OCI-LY7 (cell line): ENCODE measurements at regions of chr5 and their contacts with region 1.

Region 1: DNA sequence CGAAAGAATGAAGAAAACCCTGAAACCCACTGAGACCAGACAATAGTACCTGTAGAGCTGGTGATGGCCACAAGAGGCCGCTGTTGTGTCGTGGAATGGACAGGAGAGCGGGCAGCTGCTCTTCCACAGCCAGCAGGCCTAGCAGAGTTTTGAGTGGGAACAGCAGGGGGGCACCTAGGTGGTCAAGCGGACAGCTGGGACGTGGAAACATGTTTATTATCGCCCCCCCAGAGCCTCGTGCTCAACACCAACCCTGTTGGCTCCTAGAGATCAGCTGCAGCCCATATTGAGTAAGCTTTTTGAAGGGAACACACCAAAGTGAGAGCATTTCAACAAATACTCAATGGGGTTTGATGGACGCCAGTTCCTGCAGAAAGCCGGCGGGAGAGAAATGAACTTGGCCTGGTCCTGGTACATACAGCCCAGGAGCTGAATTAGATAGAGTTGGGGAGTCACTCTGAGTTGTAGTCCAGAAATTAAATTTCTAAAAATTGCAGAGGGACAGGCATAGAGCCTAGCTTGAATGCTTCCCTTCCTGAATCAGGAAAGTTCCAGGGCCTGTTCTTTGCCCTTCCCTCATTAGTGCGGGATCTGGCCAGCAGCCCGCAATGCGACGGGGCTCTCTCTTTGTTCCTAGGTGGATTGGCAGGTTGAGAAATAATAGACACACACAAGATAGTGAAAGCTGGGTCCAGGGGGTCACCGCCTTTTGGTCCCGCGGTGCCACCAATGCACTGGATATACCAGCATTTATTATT is 33.8 kb downstream of the MFAP3 start:
- DNase-seq: peak; percentile 76
- H3K4me3 ChIP-seq: peak overlapping the region; percentile 10
- H3K27ac ChIP-seq: no peak overlapping the region
- H3K4me1 ChIP-seq: no peaks in the 10 kb centered on the region
- CTCF ChIP-seq: peak; percentile 98

Region 2: DNA sequence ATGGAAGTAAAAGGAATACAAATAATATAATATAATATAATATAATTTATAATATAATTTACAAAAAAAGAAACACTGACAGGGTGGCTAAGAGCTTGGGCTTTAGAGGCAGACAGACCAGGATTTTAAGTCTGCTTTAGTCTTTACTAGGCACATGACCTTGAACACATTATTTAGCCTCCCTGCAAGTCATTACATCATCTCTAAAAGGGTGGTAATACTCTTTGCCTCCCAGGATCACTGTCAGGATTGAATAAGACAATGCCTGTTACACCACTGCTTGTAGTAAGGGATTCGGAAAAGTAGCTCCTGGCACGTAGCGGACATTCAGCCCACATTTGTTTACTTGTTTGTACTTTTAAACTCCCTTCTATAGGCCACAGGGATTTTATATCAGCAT is 382.4 kb before region 1 on chr5:
- CTCF ChIA-PET with region 1: no interaction called
- POLR2A ChIA-PET with region 1: no interaction called
- intact Hi-C with region 1: no loop called
- DNase-seq: no peak
- H3K4me3 ChIP-seq: no peak overlapping the region
- H3K27ac ChIP-seq: no peak overlapping the region
- H3K4me1 ChIP-seq: no peaks in the 10 kb centered on the region
- CTCF ChIP-seq: no peak

Region 3: GRCh38 chr5:153974131-153974812 is 98.3 kb before region 1 on chr5:
- CTCF ChIA-PET with region 1: no interaction called
- POLR2A ChIA-PET with region 1: interaction called, 3 read pairs
- intact Hi-C with region 1: loop called (anchors 1 kb)
- DNase-seq: peak; percentile 51
- H3K4me3 ChIP-seq: no peak overlapping the region
- H3K27ac ChIP-seq: no peak overlapping the region
- H3K4me1 ChIP-seq: no peaks in the 10 kb centered on the region
- CTCF ChIP-seq: peak; percentile 93

Region 4: DNA sequence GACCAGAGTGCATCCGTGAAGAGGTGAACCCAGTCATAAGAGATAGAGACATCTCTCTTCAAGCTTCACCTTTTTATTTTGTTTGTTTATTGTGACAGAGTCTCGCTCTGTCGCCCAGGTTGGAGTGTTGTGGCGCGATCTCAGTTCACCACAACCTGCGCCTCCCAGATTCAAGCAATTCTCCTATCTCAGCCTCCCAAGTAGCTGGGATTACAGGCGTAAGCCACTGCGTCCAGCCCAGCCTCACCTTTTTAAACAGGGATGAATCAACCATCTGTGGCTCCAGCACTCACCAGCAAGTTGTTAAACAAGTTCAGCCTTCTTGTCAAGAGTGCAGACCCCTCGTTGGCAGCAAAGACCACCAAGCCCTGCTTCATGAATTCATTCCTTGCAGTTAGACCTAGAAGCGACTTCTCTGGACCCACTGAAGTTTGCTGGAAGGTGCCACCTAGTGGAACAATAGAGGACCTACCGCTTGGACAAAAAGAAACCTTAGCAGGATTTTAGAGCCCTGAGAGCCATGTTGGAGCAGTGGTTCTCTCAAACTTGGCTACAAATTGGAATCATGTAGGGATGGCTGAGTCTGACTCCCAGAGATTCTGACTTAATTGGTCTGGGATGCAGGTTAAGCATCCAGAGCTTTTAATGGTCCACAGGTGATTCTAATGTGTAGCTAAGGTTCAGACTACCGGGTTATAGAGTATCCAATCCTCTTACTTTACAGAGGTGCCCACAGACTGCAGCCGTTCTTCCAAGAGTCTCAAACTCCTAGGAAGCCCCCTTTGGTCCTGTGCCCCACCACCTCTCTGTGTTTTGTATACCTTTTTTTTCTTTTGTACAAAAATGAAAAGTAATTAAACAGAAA is 107.5 kb after region 1 on chr5:
- CTCF ChIA-PET with region 1: no interaction called
- POLR2A ChIA-PET with region 1: interaction called, 6 read pairs
- intact Hi-C with region 1: loop called (anchors 1 kb)
- DNase-seq: peak; percentile 71
- H3K4me3 ChIP-seq: no peak overlapping the region
- H3K27ac ChIP-seq: no peak overlapping the region
- H3K4me1 ChIP-seq: no peaks in the 10 kb centered on the region
- CTCF ChIP-seq: peak; percentile 84

Region 5: DNA sequence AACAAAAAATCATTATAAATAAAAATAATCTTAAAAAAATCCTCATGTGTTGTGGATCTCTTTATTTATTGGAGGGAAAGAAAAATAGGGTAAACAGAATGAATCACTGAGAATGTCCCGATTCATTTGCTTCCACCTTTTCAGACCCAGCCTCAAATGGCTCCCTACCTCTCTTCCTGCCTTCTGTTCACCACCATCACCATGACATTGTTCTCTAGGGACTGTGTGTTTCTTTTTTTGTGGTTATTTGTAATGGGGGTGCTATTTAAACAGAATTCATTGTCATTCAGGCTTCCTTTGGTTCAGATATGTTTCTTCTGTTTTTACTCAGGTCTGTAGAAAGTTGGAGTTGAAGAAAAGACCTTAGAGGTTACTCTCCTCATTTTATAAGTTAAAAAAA is 1139.2 kb after region 1 on chr5:
- CTCF ChIA-PET with region 1: interaction called, 10 read pairs
- POLR2A ChIA-PET with region 1: no interaction called
- intact Hi-C with region 1: no loop called
- DNase-seq: no peak
- H3K4me3 ChIP-seq: no peak overlapping the region
- H3K27ac ChIP-seq: no peak overlapping the region
- H3K4me1 ChIP-seq: no peaks in the 10 kb centered on the region
- CTCF ChIP-seq: no peak